MCF 10A (cell line): ENCODE measurements at regions of chr12 and their contacts with region 1.

Region 1: DNA sequence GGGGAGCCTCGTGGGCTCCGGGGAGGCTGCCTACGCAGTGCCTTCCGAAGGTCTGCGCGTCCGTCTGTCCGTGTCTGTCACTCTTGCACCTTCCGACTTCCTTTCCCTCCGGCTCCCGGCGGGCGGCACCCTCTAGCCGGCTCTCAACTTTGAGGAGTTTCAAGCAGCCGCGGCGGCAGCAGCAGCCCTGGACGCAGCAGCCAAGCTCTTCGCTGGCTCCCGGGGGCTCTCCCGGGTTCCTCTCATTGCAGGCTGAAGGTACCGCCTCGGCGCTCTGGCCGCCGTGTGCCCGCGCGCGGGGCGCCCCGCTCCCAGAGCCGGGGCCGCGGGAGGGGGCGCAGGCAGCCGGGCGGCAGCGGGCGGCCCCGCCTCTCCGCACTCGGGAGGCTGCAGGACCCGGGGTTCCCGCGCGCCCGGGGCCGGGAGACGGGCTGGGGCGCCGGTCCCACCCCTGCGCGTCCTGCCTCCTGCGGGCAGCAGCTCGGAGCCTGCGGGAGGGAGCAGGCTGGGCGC is at the starts of genes AMIGO2 and PCED1B:
- DNase-seq: peak; percentile 82
- H3K4me3 Mint-ChIP-seq: peak within 1 kb of the TSS; percentile 92
- H3K27ac Mint-ChIP-seq: peak within 1 kb of the TSS; percentile 77
- H3K4me1 Mint-ChIP-seq: peaks cover 68% of the 10 kb centered on the region
- H3K27me3 Mint-ChIP-seq: no peaks in the 10 kb centered on the region
- CTCF ChIP-seq: peak; percentile 72
- total RNA-seq, gene AMIGO2: 13.0 and 32.6 TPM in 2 replicates
- total RNA-seq, gene PCED1B: 5.1 and 9.6 TPM in 2 replicates

Region 2: DNA sequence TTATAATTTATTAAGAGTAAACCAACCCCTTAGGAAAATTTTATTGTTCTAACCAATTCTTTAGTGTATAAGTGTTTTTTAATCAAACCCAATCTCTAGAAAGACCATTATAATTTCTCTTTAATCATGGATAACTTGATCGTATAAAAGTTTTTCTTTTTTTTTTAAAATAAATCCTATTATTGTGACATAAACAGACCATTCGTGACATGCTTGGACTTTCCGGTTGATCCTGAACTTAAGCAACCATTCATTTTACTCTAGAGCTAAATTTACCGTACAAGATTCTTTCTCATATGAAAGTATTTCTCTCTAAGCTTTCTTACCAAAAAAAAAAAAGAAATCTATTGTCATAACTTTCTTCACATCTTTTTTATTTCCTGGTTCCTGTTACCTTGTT is 221.2 kb before region 1 on chr12:
- CTCF ChIA-PET with region 1: no interaction called
- POLR2A ChIA-PET with region 1: no interaction called
- intact Hi-C with region 1: no loop called
- DNase-seq: peak; percentile 15
- H3K4me3 Mint-ChIP-seq: no peak overlapping the region
- H3K27ac Mint-ChIP-seq: no peak overlapping the region
- H3K4me1 Mint-ChIP-seq: no peaks in the 10 kb centered on the region
- H3K27me3 Mint-ChIP-seq: no peaks in the 10 kb centered on the region
- CTCF ChIP-seq: no peak

Region 3: GRCh38 chr12:47032644-47033043 is 46.9 kb before region 1 on chr12:
- CTCF ChIA-PET with region 1: interaction called, 51 read pairs
- POLR2A ChIA-PET with region 1: interaction called, 25 read pairs
- intact Hi-C with region 1: loop called (anchors 1 kb)
- DNase-seq: peak; percentile 62
- H3K4me3 Mint-ChIP-seq: no peak overlapping the region
- H3K27ac Mint-ChIP-seq: peak overlapping the region; percentile 72
- H3K4me1 Mint-ChIP-seq: peaks cover 21% of the 10 kb centered on the region
- H3K27me3 Mint-ChIP-seq: no peaks in the 10 kb centered on the region
- CTCF ChIP-seq: peak; percentile 51

Region 4: GRCh38 chr12:47155457-47156166 is 76.1 kb after region 1 on chr12:
- CTCF ChIA-PET with region 1: no interaction called
- POLR2A ChIA-PET with region 1: no interaction called
- intact Hi-C with region 1: no loop called
- DNase-seq: no peak
- H3K4me3 Mint-ChIP-seq: no peak overlapping the region
- H3K27ac Mint-ChIP-seq: no peak overlapping the region
- H3K4me1 Mint-ChIP-seq: peaks cover 6% of the 10 kb centered on the region
- H3K27me3 Mint-ChIP-seq: no peaks in the 10 kb centered on the region
- CTCF ChIP-seq: no peak

Region 5: GRCh38 chr12:47212701-47213039 is 133.1 kb after region 1 on chr12:
- CTCF ChIA-PET with region 1: interaction called, 5 read pairs
- POLR2A ChIA-PET with region 1: interaction called, 12 read pairs
- intact Hi-C with region 1: loop called (anchors 1 kb)
- DNase-seq: no peak
- H3K4me3 Mint-ChIP-seq: no peak overlapping the region
- H3K27ac Mint-ChIP-seq: no peak overlapping the region
- H3K4me1 Mint-ChIP-seq: peaks cover 23% of the 10 kb centered on the region
- H3K27me3 Mint-ChIP-seq: no peaks in the 10 kb centered on the region
- CTCF ChIP-seq: no peak

Region 6: DNA sequence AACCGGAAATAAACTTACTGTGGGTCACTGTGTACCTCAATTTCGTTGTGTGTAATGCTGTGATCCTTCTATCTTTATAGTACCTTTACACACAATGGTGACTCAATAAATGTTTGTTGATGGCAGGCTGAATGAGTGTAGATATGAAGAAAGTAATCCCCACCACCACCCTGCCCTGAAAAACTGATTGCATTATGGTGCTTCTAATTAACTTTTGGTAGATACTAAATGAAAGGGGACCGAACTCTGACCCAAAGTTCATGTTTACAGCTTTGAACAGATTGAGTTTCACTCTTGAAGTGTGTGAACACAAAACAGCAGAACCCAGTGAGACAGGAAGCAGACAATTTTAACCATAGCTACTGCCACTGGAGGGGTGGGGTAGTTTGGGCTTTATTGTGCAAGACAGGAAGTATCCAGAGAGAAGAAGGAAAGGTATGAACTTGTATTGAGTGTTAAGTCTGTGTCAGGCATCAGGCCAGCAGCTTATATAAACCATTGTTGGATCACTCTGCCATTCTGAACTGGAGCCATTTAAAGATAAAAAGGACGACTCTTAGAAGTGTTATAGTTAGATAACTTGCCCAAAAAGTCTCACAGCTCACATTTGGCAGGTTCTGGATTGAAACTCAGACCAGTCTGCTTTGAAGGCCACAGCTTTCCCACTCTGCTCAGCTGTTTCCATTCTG is 197.2 kb after region 1 on chr12:
- CTCF ChIA-PET with region 1: no interaction called
- POLR2A ChIA-PET with region 1: interaction called, 41 read pairs
- intact Hi-C with region 1: loop called (anchors 1 kb)
- DNase-seq: peak; percentile 93
- H3K4me3 Mint-ChIP-seq: peak overlapping the region; percentile 34
- H3K27ac Mint-ChIP-seq: peak overlapping the region; percentile 83
- H3K4me1 Mint-ChIP-seq: peaks cover 56% of the 10 kb centered on the region
- H3K27me3 Mint-ChIP-seq: no peaks in the 10 kb centered on the region
- CTCF ChIP-seq: no peak

Region 7: GRCh38 chr12:47307680-47308399 is 228.3 kb after region 1 on chr12:
- CTCF ChIA-PET with region 1: interaction called, 24 read pairs
- POLR2A ChIA-PET with region 1: interaction called, 19 read pairs
- intact Hi-C with region 1: loop called (anchors 1 kb)
- DNase-seq: peak; percentile 75
- H3K4me3 Mint-ChIP-seq: no peak overlapping the region
- H3K27ac Mint-ChIP-seq: no peak overlapping the region
- H3K4me1 Mint-ChIP-seq: peaks cover 11% of the 10 kb centered on the region
- H3K27me3 Mint-ChIP-seq: no peaks in the 10 kb centered on the region
- CTCF ChIP-seq: peak; percentile 73

Region 8: GRCh38 chr12:47686645-47687240 is 607.2 kb after region 1 on chr12:
- CTCF ChIA-PET with region 1: interaction called, 4 read pairs
- POLR2A ChIA-PET with region 1: no interaction called
- intact Hi-C with region 1: loop called (anchors 1 kb)
- DNase-seq: peak; percentile 44
- H3K4me3 Mint-ChIP-seq: no peak overlapping the region
- H3K27ac Mint-ChIP-seq: no peak overlapping the region
- H3K4me1 Mint-ChIP-seq: no peaks in the 10 kb centered on the region
- H3K27me3 Mint-ChIP-seq: no peaks in the 10 kb centered on the region
- CTCF ChIP-seq: peak; percentile 52